T-cell (primary cell): ENCODE measurements at regions of chr14 and their contacts with region 1.

Region 1: GRCh38 chr14:21263656-21264411 is 5.4 kb downstream of the HNRNPC start:
- DNase-seq: peak in 1 of 35 experiments; percentile 63
- ATAC-seq: peak; percentile 49 to 83 (median 81)
- H3K4me3 ChIP-seq: no peak overlapping the region
- H3K4me3 Mint-ChIP-seq: peak overlapping the region; percentile 90 to 100 (median 100)
- H3K27ac ChIP-seq: peak overlapping the region; percentile 54
- H3K27ac Mint-ChIP-seq: peak overlapping the region; percentile 60 to 90
- H3K4me1 ChIP-seq: peaks cover 34 to 50% of the 10 kb centered on the region in 2 experiments
- H3K4me1 Mint-ChIP-seq: peaks cover 77 to 85% (median 81%) of the 10 kb centered on the region in 3 donors
- H3K27me3 ChIP-seq: no peaks in the 10 kb centered on the region
- H3K27me3 Mint-ChIP-seq: no peaks in the 10 kb centered on the region

Region 2: DNA sequence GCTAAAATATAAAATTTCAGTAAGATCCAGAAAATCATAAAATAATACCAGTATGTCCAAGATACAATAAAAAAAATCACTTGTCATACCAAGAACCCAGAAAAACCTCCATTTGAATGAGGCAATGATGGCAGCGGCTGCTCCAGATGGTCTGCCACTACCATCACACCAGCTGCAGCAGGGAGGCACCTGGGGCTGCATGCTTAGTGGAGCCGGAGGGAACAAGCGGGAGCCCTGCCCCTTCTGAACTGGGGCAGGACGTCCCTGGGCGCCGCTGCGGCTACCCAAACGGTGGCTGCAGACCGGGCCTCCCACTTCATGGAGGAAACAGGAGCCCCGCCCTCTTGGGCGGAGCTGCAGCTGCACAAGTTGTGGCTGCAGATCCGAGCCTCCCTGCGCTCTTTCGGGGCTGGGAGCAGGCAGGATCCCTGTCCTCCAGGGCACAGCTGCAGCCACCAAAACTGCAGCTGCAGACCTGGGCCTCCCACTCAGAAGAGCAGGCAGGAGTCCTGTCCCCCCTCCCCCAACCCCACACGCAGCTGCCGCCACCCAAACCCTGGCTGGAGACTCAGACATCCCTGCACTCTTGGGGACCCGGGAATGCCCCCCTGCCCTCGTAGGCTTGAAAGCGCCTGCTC is 71.9 kb before region 1 on chr14:
- CTCF ChIA-PET with region 1: no interaction called
- POLR2A ChIA-PET with region 1: no interaction called
- DNase-seq: peak; percentile 28 to 77 (median 60)
- ATAC-seq: peak; percentile 89 to 99 (median 94)
- H3K4me3 ChIP-seq: peak overlapping the region; percentile 55 to 59
- H3K4me3 Mint-ChIP-seq: peak overlapping the region; percentile 65 to 77 (median 73)
- H3K27ac ChIP-seq: no peak overlapping the region
- H3K27ac Mint-ChIP-seq: no peak overlapping the region
- H3K4me1 ChIP-seq: peaks cover 2 to 17% of the 10 kb centered on the region in 2 experiments
- H3K4me1 Mint-ChIP-seq: peaks cover 10 to 14% (median 12%) of the 10 kb centered on the region in 3 donors
- H3K27me3 ChIP-seq: peaks cover 0 to 10% of the 10 kb centered on the region in 2 experiments
- H3K27me3 Mint-ChIP-seq: no peaks in the 10 kb centered on the region

Region 3: DNA sequence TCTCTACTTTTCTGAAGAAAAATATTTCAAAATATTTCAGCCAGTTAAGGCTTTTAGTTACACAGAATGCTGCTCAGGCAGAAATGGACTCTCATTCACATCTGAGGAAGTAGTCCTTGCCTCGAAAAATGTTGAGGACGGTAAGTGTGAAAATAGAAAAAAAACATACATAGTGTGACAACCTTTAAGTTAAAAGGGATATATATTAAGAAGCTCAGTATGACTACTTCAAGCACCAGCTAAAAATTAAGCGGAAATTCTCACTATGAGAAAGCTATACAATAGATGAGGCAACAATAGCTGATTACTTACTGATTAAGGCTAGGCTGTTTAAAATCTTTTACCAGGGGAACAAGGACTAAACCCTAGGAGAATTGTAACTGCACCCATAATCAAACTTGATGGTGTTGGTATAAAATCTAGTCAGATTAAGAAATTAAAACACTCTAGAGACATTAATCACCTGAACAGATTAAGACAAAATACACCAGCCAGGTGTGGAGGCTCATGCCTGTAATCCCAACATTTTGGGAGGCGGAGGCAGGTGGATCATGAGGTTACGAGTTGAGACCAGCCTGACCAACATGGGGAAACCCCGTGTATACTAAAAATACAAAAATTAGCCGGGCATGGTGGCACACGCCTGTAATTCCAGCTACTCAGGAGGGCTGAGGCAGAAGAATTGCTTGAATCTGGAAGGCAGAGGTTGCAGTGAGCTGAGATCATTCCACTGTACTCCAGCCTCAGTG is 48.5 kb before region 1 on chr14:
- CTCF ChIA-PET with region 1: interaction called in 1 of 2 experiments, 10 read pairs
- POLR2A ChIA-PET with region 1: interaction called in 1 of 2 experiments, 3 read pairs
- DNase-seq: no peak
- ATAC-seq: peak in 1 of 4 experiments; percentile 15
- H3K4me3 ChIP-seq: peak overlapping the region in 1 of 2 donors; percentile 25
- H3K4me3 Mint-ChIP-seq: peak overlapping the region; percentile 28 to 69 (median 59)
- H3K27ac ChIP-seq: peak overlapping the region; percentile 44
- H3K27ac Mint-ChIP-seq: peak overlapping the region; percentile 56 to 86
- H3K4me1 ChIP-seq: peaks cover 23 to 33% of the 10 kb centered on the region in 2 experiments
- H3K4me1 Mint-ChIP-seq: peaks cover 71 to 82% (median 78%) of the 10 kb centered on the region in 3 donors
- H3K27me3 ChIP-seq: no peaks in the 10 kb centered on the region
- H3K27me3 Mint-ChIP-seq: no peaks in the 10 kb centered on the region

Region 4: DNA sequence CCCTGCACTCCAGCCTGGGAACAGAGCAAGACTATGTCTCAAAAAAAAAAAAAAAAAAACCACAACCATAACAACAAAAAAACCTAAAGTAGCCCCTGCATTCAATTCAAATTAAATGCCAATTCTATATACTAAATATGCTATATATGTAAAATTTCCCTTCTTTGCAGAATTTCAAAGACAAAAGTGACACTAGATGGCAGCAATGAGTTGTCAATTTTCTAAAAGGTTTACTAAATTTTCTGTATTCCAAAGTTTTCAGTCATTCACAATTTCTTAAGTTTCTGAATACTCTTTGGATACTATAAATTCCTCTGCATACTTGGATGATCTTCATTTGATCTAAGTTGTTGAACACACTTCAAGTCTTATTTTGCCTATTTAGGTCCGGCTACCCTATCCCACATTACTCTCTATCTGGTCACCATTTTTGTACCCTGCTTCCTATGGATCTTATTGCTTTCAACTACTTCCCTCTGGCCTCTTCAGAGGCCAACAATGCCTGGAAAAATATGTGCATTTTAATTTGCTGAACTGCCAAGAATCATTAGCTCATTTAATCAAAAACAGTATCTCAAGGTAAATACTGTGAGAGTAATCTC is 22.5 kb before region 1 on chr14:
- CTCF ChIA-PET with region 1: interaction called in 1 of 2 experiments, 5 read pairs
- POLR2A ChIA-PET with region 1: interaction called, 9 to 20 read pairs
- DNase-seq: peak in 1 of 35 experiments; percentile 69
- ATAC-seq: no peak
- H3K4me3 ChIP-seq: no peak overlapping the region
- H3K4me3 Mint-ChIP-seq: peak overlapping the region in 1 of 3 donors; percentile 22
- H3K27ac ChIP-seq: no peak overlapping the region
- H3K27ac Mint-ChIP-seq: peak overlapping the region; percentile 34 to 76
- H3K4me1 ChIP-seq: peaks cover 14 to 41% of the 10 kb centered on the region in 2 experiments
- H3K4me1 Mint-ChIP-seq: peaks cover 72 to 84% (median 79%) of the 10 kb centered on the region in 3 donors
- H3K27me3 ChIP-seq: no peaks in the 10 kb centered on the region
- H3K27me3 Mint-ChIP-seq: no peaks in the 10 kb centered on the region

Region 5: GRCh38 chr14:21317398-21317797 is 53.6 kb after region 1 on chr14:
- CTCF ChIA-PET with region 1: interaction called in 1 of 2 experiments, 15 read pairs
- POLR2A ChIA-PET with region 1: no interaction called
- DNase-seq: no peak
- ATAC-seq: no peak
- H3K4me3 ChIP-seq: no peak overlapping the region
- H3K4me3 Mint-ChIP-seq: no peak overlapping the region
- H3K27ac ChIP-seq: no peak overlapping the region
- H3K27ac Mint-ChIP-seq: no peak overlapping the region
- H3K4me1 ChIP-seq: no peaks in the 10 kb centered on the region
- H3K4me1 Mint-ChIP-seq: peaks cover 8 to 13% (median 8%) of the 10 kb centered on the region in 3 donors
- H3K27me3 ChIP-seq: peaks cover 0 to 19% of the 10 kb centered on the region in 2 experiments
- H3K27me3 Mint-ChIP-seq: peaks cover 0 to under 1% of the 10 kb centered on the region in 2 donors

Region 6: DNA sequence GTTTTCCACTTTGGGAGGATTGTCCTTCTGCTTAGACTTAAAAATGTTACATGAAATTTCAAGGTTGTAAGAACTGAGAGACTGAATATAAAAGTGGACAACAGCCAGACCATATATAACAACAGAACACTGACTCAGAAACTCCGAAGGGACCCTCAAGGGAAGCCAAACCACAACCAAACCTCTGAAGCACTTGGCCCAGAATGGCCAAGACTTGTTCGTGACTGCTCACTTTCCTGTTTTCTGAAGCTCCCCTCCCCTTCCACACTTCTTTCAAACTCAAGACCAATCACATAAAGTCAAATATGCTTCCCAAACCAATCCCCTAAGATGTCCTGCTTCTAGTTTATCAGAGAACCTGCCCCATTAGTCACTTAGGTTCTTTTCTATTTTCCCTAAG is 1366.7 kb after region 1 on chr14:
- CTCF ChIA-PET with region 1: no interaction called
- POLR2A ChIA-PET with region 1: no interaction called
- DNase-seq: no peak
- ATAC-seq: no peak
- H3K4me3 ChIP-seq: no peak overlapping the region
- H3K4me3 Mint-ChIP-seq: no peak overlapping the region
- H3K27ac ChIP-seq: no peak overlapping the region
- H3K27ac Mint-ChIP-seq: no peak overlapping the region
- H3K4me1 ChIP-seq: no peaks in the 10 kb centered on the region
- H3K4me1 Mint-ChIP-seq: no peaks in the 10 kb centered on the region
- H3K27me3 ChIP-seq: peaks cover 0 to 8% of the 10 kb centered on the region in 2 experiments
- H3K27me3 Mint-ChIP-seq: peaks cover 13 to 19% of the 10 kb centered on the region in 2 donors